Right lobe of liver (tissue), 6 donors: ENCODE measurements at regions of chr15 and their contacts with region 1.

Region 1: GRCh38 chr15:78927077-78927784 is 17.6 kb downstream of the CTSH start:
- DNase-seq: peak in 1 of 3 donors; percentile 47
- ATAC-seq: peak in 1 of 4 donors; percentile 7
- H3K4me3 ChIP-seq: no peak overlapping the region
- H3K27ac ChIP-seq: no peak overlapping the region
- H3K4me1 ChIP-seq: peaks cover 0 to 6% (median 0%) of the 10 kb centered on the region in 4 donors
- H3K27me3 ChIP-seq: no peaks in the 10 kb centered on the region
- CTCF ChIP-seq: no peak
- POLR2A ChIP-seq: no peak

Region 2: GRCh38 chr15:78979456-78980320 is 52.5 kb after region 1 on chr15:
- intact Hi-C with region 1: loop called (anchors 10 kb)
- DNase-seq: peak; percentile 56 to 85 (median 74)
- ATAC-seq: peak; percentile 77 to 86 (median 82)
- H3K4me3 ChIP-seq: no peak overlapping the region
- H3K27ac ChIP-seq: no peak overlapping the region
- H3K4me1 ChIP-seq: peaks cover 0 to 5% (median 0%) of the 10 kb centered on the region in 4 donors
- H3K27me3 ChIP-seq: no peaks in the 10 kb centered on the region
- CTCF ChIP-seq: peak; percentile 71 to 85 (median 80)
- POLR2A ChIP-seq: no peak

Region 3: DNA sequence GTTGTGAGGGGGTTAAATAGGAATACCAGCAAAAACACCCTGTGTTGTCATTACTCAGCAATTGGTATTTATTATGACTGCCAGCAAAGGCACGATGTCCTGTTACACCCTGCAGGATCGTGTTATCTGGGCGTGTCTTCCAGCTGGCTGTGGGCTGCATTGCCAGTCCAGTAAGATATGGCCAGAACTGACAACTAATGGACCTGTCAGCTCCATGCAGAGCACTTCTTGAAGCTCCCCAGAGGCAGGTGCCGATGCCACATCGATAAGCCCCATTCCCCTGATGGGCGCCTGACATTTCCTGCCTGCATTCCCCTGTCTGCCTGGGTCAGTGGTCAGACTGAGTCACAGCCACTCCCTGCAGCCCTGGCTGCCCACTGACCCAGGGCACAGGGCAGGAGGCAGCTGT is 243.0 kb after region 1 on chr15:
- intact Hi-C with region 1: loop called in 1 of 2 experiments (anchors 10 kb)
- DNase-seq: no peak
- ATAC-seq: peak in 1 of 4 donors; percentile 25
- H3K4me3 ChIP-seq: no peak overlapping the region
- H3K27ac ChIP-seq: no peak overlapping the region
- H3K4me1 ChIP-seq: no peaks in the 10 kb centered on the region
- H3K27me3 ChIP-seq: no peaks in the 10 kb centered on the region
- CTCF ChIP-seq: no peak
- POLR2A ChIP-seq: no peak